GM12878 (cell line): ENCODE measurements at regions of chr19 and their contacts with region 1.

Region 1: DNA sequence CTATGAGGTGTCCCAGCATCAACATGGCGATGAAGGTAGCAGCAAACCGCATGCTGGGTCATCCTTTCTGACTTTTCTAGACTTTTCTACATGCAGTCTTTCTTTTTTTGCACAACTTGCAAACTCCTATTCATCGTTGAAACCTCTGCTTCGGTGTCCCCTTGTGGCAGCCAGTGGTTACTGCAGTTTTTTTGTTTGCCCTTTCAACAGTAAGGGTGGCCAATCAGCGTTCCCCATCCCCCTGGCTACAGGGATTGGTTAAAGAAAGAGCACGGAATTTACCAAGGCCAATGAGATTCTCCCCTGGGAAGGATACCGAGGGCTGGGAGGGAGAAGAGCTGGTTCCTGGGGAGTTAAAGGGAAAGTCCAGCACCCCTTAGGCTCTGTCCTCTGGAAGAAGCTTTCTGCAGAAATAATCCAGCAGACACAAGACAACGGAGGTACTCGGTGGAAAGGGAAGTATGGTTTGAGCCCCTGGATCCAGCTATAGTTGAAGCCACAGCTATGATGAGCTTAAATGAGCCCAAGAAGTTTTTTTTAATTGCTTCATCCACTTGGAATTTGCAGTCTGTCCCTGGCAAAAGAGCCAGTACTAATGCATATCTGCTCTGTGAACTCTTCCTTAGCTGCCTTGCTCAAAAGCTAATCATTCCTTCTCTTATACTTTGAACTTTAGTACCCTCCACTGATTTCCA is 5.6 kb upstream of the LSM4 start:
- DNase-seq: peak; percentile 91
- ATAC-seq: peak; percentile 100
- H3K4me3 ChIP-seq: peak overlapping the region; percentile 64
- H3K27ac ChIP-seq: peak overlapping the region; percentile 27
- H3K4me1 ChIP-seq: peaks cover 4% of the 10 kb centered on the region
- H3K27me3 ChIP-seq: no peaks in the 10 kb centered on the region
- CTCF ChIP-seq: peak; percentile 89 to 98 (median 95)
- EP300 ChIP-seq: no peak
- POLR2A ChIP-seq: no peak
- RAD21 ChIP-seq: peak; percentile 91

Region 2: GRCh38 chr19:18192673-18193387 is 135.7 kb before region 1 on chr19 and contains the start of gene MPV17L2:
- CTCF ChIA-PET with region 1: interaction called, 4 read pairs
- POLR2A ChIA-PET with region 1: interaction called, 3 read pairs
- RAD21 ChIA-PET with region 1: interaction called, 14 read pairs
- SMC1A ChIA-PET with region 1: interaction called, 9 read pairs
- in situ Hi-C with region 1: no loop called
- intact Hi-C with region 1: no loop called
- DNase-seq: peak; percentile 100
- ATAC-seq: peak; percentile 94
- H3K4me3 ChIP-seq: peak within 1 kb of the TSS; percentile 79
- H3K27ac ChIP-seq: peak within 1 kb of the TSS; percentile 65
- H3K4me1 ChIP-seq: peaks cover 11% of the 10 kb centered on the region
- H3K27me3 ChIP-seq: no peaks in the 10 kb centered on the region
- CTCF ChIP-seq: no peak
- EP300 ChIP-seq: 0 out of 4 replicates have a peak, but pooled peaks of 1 of the 2 experiments have one; percentile 8
- POLR2A ChIP-seq: peak; percentile 72
- RAD21 ChIP-seq: no peak
- polyA plus RNA-seq, gene MPV17L2: 5.1 to 7.7 TPM

Region 3: GRCh38 chr19:18224525-18225354 is 103.7 kb before region 1 on chr19:
- CTCF ChIA-PET with region 1: interaction called, 20 read pairs
- POLR2A ChIA-PET with region 1: interaction called, 3 read pairs
- RAD21 ChIA-PET with region 1: interaction called, 5 read pairs
- SMC1A ChIA-PET with region 1: interaction called, 10 read pairs
- in situ Hi-C with region 1: no loop called
- intact Hi-C with region 1: no loop called
- DNase-seq: peak; percentile 80
- ATAC-seq: peak; percentile 99
- H3K4me3 ChIP-seq: peak overlapping the region; percentile 18; the same call in 1 of the 2 replicates
- H3K27ac ChIP-seq: no peak overlapping the region
- H3K4me1 ChIP-seq: peaks cover 19% of the 10 kb centered on the region
- H3K27me3 ChIP-seq: peaks cover 0 to 7% of the 10 kb centered on the region in 2 experiments; a peak in 3 of 4 replicates
- CTCF ChIP-seq: no peak
- EP300 ChIP-seq: no peak
- POLR2A ChIP-seq: no peak
- RAD21 ChIP-seq: no peak

Region 4: DNA sequence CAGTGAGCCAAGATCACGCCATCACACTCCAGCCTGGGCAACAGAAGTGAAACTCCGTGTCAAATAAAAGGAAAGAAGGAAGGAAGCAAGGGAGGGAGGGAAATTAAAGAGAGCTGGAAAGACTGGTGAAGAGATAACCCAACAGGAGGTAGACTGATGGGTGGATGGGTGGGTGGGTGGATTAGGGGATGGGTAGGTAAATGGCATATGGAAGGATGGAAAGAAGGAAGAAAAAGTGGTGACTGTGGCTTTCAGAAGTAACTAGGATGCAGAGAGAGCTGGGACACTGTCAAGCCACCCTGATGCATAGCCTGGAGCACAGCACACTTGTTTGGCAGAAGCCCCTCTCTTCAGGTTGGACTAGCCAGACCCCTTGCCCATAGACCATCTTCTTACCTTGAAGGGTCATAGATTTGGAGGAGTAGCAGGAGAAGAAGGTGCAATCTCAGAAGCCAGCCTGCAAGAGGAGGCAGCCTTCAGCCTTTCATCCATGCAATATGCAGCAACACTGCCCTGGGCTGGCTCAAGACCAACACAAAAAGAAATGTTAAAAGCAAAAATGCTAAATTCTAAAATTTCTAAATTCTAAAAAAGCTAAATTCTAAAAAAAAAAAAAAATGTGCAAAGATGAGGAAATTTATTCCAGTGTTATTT is 59.3 kb before region 1 on chr19:
- CTCF ChIA-PET with region 1: interaction called, 516 read pairs
- POLR2A ChIA-PET with region 1: interaction called, 3 read pairs
- RAD21 ChIA-PET with region 1: interaction called, 16 read pairs
- SMC1A ChIA-PET with region 1: interaction called, 5 read pairs
- in situ Hi-C with region 1: no loop called
- intact Hi-C with region 1: no loop called
- DNase-seq: no peak
- ATAC-seq: no peak
- H3K4me3 ChIP-seq: no peak overlapping the region
- H3K27ac ChIP-seq: no peak overlapping the region
- H3K4me1 ChIP-seq: no peaks in the 10 kb centered on the region
- H3K27me3 ChIP-seq: no peaks in the 10 kb centered on the region
- CTCF ChIP-seq: no peak
- EP300 ChIP-seq: no peak
- POLR2A ChIP-seq: no peak
- RAD21 ChIP-seq: no peak

Region 5: GRCh38 chr19:18291590-18292461 is 36.7 kb before region 1 on chr19:
- CTCF ChIA-PET with region 1: interaction called, 18 read pairs
- POLR2A ChIA-PET with region 1: interaction called, 13 read pairs
- RAD21 ChIA-PET with region 1: interaction called, 16 read pairs
- SMC1A ChIA-PET with region 1: interaction called, 10 read pairs
- in situ Hi-C with region 1: no loop called
- intact Hi-C with region 1: loop called (anchors 1 kb)
- DNase-seq: no peak
- ATAC-seq: peak; percentile 69
- H3K4me3 ChIP-seq: peak overlapping the region; percentile 96
- H3K27ac ChIP-seq: peak overlapping the region; percentile 96
- H3K4me1 ChIP-seq: peaks cover 32% of the 10 kb centered on the region
- H3K27me3 ChIP-seq: no peaks in the 10 kb centered on the region; a peak in 1 of 4 replicates
- CTCF ChIP-seq: no peak
- EP300 ChIP-seq: peak; percentile 75 to 83; a peak in 3 of 4 replicates
- POLR2A ChIP-seq: peak; percentile 72
- RAD21 ChIP-seq: no peak; the same call in 1 of the 2 replicates

Region 6: GRCh38 chr19:18340190-18340989 is 11.9 kb after region 1 on chr19 and contains the start of gene PGPEP1:
- CTCF ChIA-PET with region 1: interaction called, 56 read pairs
- POLR2A ChIA-PET with region 1: interaction called, 14 read pairs
- RAD21 ChIA-PET with region 1: interaction called, 24 read pairs
- SMC1A ChIA-PET with region 1: interaction called, 42 read pairs
- in situ Hi-C with region 1: no loop called
- intact Hi-C with region 1: no loop called
- DNase-seq: no peak
- ATAC-seq: peak; percentile 86
- H3K4me3 ChIP-seq: peak within 1 kb of the TSS; percentile 79
- H3K27ac ChIP-seq: peak within 1 kb of the TSS; percentile 58
- H3K4me1 ChIP-seq: peaks cover 14% of the 10 kb centered on the region
- H3K27me3 ChIP-seq: no peaks in the 10 kb centered on the region
- CTCF ChIP-seq: no peak
- EP300 ChIP-seq: no peak
- POLR2A ChIP-seq: peak; percentile 70; the same call in 1 of the 2 replicates
- RAD21 ChIP-seq: no peak
- polyA plus RNA-seq, gene PGPEP1: 13.8 to 13.9 TPM

Region 7: GRCh38 chr19:18419195-18419698 is 90.8 kb after region 1 on chr19 and contains the start of gene SSBP4:
- CTCF ChIA-PET with region 1: interaction called, 75 read pairs
- POLR2A ChIA-PET with region 1: interaction called, 3 read pairs
- RAD21 ChIA-PET with region 1: interaction called, 36 read pairs
- SMC1A ChIA-PET with region 1: interaction called, 9 read pairs
- in situ Hi-C with region 1: no loop called
- intact Hi-C with region 1: no loop called
- DNase-seq: no peak
- ATAC-seq: peak; percentile 37
- H3K4me3 ChIP-seq: peak within 1 kb of the TSS; percentile 87
- H3K27ac ChIP-seq: peak within 1 kb of the TSS; percentile 72
- H3K4me1 ChIP-seq: peaks cover 70% of the 10 kb centered on the region
- H3K27me3 ChIP-seq: no peaks in the 10 kb centered on the region
- CTCF ChIP-seq: peak in 2 of 3 experiments; percentile 14 to 34; a peak in 2 of 6 replicates
- EP300 ChIP-seq: peak in 1 of 2 experiments; percentile 36; a peak in 1 of 4 replicates
- POLR2A ChIP-seq: no peak
- RAD21 ChIP-seq: no peak
- polyA plus RNA-seq, gene SSBP4: 0.37 to 6.6 TPM